Natural killer cell (primary cell): ENCODE measurements at regions of chr7 and their contacts with region 1.

Region 1: GRCh38 chr7:17680943-17681351 is 259.3 kb downstream of the SNX13 start:
- DNase-seq: peak in 1 of 2 donors; percentile 42
- ATAC-seq: no peak
- H3K4me3 ChIP-seq: no peak overlapping the region
- H3K4me3 Mint-ChIP-seq: no peak overlapping the region
- H3K27ac ChIP-seq: no peak overlapping the region
- H3K27ac Mint-ChIP-seq: no peak overlapping the region
- H3K4me1 ChIP-seq: no peaks in the 10 kb centered on the region
- H3K4me1 Mint-ChIP-seq: no peaks in the 10 kb centered on the region
- H3K27me3 ChIP-seq: no peaks in the 10 kb centered on the region
- H3K27me3 Mint-ChIP-seq: no peaks in the 10 kb centered on the region
- CTCF ChIP-seq: peak; percentile 65

Region 2: DNA sequence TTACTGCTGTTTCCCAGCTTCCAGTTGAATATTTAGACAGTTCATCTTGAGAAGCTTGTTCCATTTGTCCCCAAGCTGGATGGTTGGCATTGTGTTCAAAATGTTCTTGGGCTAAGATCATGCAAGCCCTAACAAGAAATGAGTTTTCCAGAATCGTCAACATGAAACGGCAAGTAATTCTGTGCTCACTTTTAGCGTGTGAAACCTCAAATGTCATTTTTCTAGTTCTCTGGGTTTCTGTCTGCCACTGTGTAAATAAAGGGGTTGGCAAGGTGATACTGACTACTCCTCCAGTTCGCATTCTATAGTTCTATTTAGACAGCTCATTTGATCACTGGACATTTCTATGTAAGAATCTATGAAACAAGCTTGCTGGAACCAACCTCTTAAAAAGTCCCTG is 188.5 kb before region 1 on chr7:
- intact Hi-C with region 1: no loop called
- DNase-seq: no peak
- ATAC-seq: no peak
- H3K4me3 ChIP-seq: no peak overlapping the region
- H3K4me3 Mint-ChIP-seq: no peak overlapping the region
- H3K27ac ChIP-seq: no peak overlapping the region
- H3K27ac Mint-ChIP-seq: no peak overlapping the region
- H3K4me1 ChIP-seq: no peaks in the 10 kb centered on the region
- H3K4me1 Mint-ChIP-seq: no peaks in the 10 kb centered on the region
- H3K27me3 ChIP-seq: no peaks in the 10 kb centered on the region
- H3K27me3 Mint-ChIP-seq: no peaks in the 10 kb centered on the region
- CTCF ChIP-seq: no peak

Region 3: DNA sequence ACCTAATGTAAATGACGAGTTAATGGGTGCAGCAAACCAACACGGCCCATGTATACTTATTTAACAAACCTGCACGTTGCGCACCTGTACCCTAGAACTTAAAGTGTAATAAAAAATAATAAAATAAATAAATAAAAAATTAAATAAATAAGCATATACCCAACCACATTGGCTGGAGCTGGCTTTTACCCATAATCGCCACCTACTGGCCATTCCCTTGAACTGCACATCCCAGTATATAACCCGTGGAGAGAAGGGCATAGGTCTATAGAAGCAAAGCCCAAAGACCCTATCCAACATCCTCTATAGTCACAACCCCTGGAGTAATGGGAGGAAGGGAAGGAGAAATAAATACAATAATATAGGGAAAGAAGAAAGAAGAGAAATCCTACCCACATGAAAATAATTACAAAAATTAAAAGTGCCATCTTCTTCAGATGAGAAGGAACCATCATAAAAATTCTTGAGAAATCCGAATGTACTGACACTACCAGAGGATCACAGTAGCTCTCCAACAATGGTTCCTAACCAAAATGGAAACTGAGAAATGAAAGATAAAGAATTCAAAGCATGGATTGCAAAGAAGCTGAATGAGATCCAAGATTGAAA is 1370.9 kb after region 1 on chr7:
- intact Hi-C with region 1: loop called (anchors 5 kb)
- DNase-seq: peak in 1 of 2 donors; percentile 48
- ATAC-seq: peak; percentile 44 to 67 (median 63)
- H3K4me3 ChIP-seq: no peak overlapping the region
- H3K4me3 Mint-ChIP-seq: no peak overlapping the region
- H3K27ac ChIP-seq: no peak overlapping the region
- H3K27ac Mint-ChIP-seq: no peak overlapping the region
- H3K4me1 ChIP-seq: no peaks in the 10 kb centered on the region
- H3K4me1 Mint-ChIP-seq: no peaks in the 10 kb centered on the region
- H3K27me3 ChIP-seq: no peaks in the 10 kb centered on the region
- H3K27me3 Mint-ChIP-seq: peaks cover 0 to 5% of the 10 kb centered on the region in 2 donors
- CTCF ChIP-seq: peak; percentile 80

Region 4: DNA sequence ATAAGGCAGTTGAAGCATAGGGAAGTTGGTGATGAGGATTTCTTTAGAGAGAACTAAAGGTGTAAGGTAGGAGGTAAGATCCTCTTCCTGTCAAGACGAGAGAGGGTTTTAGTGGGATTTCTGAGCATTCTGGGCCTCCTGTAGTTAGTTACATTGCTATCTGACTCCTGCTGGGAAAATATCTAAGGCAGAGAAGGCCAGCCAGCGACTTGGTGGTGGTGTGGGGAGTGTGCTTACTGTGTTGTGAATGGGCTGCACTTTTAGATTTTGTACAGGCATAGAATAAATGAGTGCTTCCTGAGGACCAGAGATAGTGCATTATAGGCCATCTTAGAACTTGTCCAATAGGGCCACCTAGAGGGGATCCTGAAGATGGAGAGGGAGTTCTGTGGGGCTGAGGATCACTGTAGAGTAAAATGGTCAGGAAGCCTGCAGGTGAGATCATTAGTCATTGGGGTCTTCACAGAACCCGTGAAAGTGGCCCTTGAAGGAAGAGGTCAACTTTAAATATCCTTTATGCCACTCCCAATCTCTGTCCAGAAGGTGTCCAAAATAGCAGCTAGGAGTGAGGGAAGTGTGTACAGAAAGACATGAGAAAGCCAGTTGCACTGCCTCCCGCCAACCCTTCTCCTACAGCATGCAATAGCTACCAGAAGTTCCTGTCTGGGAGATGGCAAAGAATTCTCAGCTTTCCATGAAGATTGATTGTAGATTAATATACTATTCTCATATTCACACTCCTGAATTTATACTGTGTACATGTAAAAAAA is 1761.3 kb after region 1 on chr7:
- intact Hi-C with region 1: loop called (anchors 5 kb)
- DNase-seq: no peak
- ATAC-seq: peak; percentile 52 to 80 (median 73)
- H3K4me3 ChIP-seq: no peak overlapping the region
- H3K4me3 Mint-ChIP-seq: no peak overlapping the region
- H3K27ac ChIP-seq: no peak overlapping the region
- H3K27ac Mint-ChIP-seq: no peak overlapping the region
- H3K4me1 ChIP-seq: no peaks in the 10 kb centered on the region
- H3K4me1 Mint-ChIP-seq: peaks cover 7 to 12% of the 10 kb centered on the region in 2 donors
- H3K27me3 ChIP-seq: no peaks in the 10 kb centered on the region
- H3K27me3 Mint-ChIP-seq: peaks cover 0 to 33% of the 10 kb centered on the region in 2 donors
- CTCF ChIP-seq: peak; percentile 38

Region 5: DNA sequence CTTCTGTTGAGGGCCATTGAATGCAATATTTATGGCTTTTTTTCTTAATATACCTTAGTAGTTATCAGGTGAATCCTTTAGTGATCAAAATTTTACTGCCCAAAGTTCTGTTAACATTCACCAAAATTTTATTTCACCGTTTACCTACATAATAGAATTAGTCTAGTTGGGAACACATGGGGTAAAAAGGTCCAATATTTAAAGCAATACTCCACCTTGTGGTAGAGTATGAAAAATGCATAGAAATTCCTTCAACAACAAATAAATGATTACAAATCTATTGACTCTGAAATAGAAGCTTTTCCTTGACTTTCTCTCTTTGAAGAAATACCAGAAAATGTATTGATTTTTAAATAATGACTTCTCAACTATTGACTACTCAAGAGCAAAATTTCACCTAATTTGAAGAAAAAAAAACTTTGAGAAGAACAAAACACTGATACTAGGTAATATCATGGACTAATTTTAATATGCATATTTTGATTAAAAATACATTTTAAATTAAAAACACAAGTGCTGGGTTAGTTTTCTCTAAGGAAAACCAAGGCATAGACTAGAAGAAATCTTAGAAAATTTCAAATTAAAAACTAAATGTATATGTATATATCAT is 1984.6 kb after region 1 on chr7:
- intact Hi-C with region 1: loop called (anchors 2 kb)
- DNase-seq: peak in 1 of 2 donors; percentile 35
- ATAC-seq: peak in 1 of 3 donors; percentile 50
- H3K4me3 ChIP-seq: no peak overlapping the region
- H3K4me3 Mint-ChIP-seq: no peak overlapping the region
- H3K27ac ChIP-seq: no peak overlapping the region
- H3K27ac Mint-ChIP-seq: no peak overlapping the region
- H3K4me1 ChIP-seq: no peaks in the 10 kb centered on the region
- H3K4me1 Mint-ChIP-seq: peaks cover 0 to 6% of the 10 kb centered on the region in 2 donors
- H3K27me3 ChIP-seq: no peaks in the 10 kb centered on the region
- H3K27me3 Mint-ChIP-seq: no peaks in the 10 kb centered on the region
- CTCF ChIP-seq: peak; percentile 70